Activated T-helper 1 cell treated with anti-CD3 and anti-CD28 coated beads, Interleukin-12 subunit alpha, Interleukin-12 subunit beta, Interleukin-2, Interleukin-4 antibody, amounts not matched to agents 30 ng/mL and 10 ng/mL and 1 ng/mL, durations not matched to agents 14 hours and 24 hours and 36 hours (primary cell): ENCODE measurements at regions of chr17 and their contacts with region 1.

Region 1: GRCh38 chr17:39794249-39794970 is 56.7 kb downstream of the GRB7 start:
- DNase-seq: no peak
- H3K4me3 Mint-ChIP-seq: peak overlapping the region; percentile 49
- H3K27ac Mint-ChIP-seq: peak overlapping the region; percentile 73
- H3K4me1 Mint-ChIP-seq: peaks cover 64% of the 10 kb centered on the region
- H3K27me3 Mint-ChIP-seq: no peaks in the 10 kb centered on the region

Region 2: DNA sequence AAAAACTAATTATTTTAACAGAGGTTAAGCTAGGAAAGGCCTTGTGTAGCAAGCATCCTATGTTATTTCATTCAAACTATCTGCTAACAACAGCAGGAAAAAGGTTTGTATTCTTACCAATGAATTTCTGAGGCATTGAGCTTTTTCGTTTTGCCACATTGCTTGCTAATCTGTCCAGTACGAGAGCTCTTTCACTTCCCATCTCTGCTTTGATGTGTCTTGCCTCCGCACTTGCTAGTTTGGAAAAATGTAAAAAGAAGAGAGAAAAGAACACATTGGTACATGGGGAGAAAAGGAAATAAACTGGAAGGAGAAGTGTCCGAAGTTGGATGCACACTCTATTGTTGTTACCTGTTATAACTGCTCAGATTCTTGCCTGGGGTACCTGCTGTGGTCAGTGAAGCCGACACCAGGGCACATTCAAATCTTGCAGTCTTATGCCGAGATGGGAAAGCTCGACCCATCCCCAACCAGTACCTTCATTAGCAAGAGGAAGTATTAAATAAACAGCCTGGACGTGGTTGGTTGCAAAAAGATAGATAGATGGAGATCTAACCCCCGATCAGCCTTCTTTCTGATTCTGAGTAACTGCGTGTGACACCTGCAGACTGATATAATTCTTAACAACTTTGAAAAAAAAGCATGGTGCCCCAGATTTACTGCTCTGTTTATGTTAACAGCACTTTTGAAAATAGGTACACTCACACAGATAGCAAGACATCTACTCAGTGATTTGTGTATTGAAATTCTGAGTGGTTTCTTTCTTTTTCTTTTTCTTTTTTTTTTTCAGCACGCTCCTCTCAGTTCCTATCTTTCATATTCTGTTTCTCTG is 16.7 kb before region 1 on chr17:
- intact Hi-C with region 1: loop called (anchors 1 kb)
- DNase-seq: no peak
- H3K4me3 Mint-ChIP-seq: peak overlapping the region; percentile 85
- H3K27ac Mint-ChIP-seq: peak overlapping the region; percentile 81
- H3K4me1 Mint-ChIP-seq: peaks cover 76% of the 10 kb centered on the region
- H3K27me3 Mint-ChIP-seq: no peaks in the 10 kb centered on the region

Region 3: DNA sequence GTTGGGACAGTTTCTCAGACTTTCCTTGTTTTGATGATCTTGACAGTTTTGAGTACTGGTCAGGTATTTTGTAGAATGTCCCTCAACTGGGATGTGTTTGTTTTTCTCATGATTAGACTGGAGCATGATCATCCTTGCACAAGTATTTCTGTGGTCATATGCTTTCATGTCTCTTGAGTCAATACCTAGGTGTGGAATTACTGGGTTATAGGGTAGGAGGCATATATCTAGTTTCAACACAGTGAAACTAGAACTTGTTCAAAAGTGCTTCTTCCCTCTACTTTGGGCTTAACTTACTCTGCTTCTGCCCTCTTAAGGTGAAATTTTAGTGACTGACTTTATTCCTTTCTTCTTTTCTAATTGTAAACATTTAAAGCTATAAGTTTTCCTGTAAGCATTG is 39.6 kb after region 1 on chr17:
- intact Hi-C with region 1: loop called (anchors 5 kb)
- DNase-seq: no peak
- H3K4me3 Mint-ChIP-seq: no peak overlapping the region
- H3K27ac Mint-ChIP-seq: no peak overlapping the region
- H3K4me1 Mint-ChIP-seq: peaks cover 3% of the 10 kb centered on the region
- H3K27me3 Mint-ChIP-seq: peaks cover 2% of the 10 kb centered on the region